ENCODE measurements at regions of chr17 and their contacts with region 1.

Region 1: DNA sequence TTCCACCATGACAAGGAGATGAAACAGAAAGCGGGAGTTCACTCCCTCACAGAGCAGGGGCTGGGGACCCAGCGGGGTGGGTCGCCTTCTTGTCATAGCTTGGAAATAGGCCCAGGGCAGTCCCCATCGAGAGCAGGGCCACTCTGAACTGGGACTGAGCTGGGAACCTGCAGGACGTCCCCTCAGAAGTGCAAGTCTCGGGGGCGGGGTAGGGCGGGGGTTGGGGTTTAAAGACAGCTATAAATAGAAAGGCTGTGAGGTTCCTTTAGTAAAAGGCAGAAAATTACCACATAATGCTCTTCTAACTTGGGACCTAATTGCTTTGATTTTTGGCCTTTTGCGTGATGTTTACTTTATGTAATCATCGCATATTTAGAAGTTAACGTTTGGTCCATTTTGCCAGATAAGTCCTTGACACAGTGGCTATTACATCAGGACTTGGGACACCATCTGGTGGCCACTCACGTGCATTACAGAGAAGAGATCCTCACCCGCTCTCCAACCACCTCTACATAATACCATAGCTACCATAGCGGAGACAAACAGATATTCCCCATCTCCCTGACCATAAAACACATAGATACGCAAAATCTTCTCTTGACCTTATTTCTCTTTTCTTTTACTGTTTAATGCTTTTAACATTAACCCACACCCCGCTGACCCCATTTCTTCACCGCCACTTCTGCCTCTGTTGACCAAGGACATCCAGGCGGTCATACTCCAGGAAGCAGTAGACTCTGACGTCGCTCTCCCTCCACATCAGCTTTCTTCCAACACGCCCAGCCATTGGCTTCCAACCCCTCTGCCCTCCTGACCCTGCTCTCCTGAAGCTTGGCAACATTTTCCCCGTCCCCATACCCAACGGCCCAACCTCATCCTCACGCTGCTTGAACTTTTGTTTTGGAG is 27.5 kb upstream of the PIK3R6 start:
- DNase-seq: no peak
- ATAC-seq: peak; percentile 90

Region 2: DNA sequence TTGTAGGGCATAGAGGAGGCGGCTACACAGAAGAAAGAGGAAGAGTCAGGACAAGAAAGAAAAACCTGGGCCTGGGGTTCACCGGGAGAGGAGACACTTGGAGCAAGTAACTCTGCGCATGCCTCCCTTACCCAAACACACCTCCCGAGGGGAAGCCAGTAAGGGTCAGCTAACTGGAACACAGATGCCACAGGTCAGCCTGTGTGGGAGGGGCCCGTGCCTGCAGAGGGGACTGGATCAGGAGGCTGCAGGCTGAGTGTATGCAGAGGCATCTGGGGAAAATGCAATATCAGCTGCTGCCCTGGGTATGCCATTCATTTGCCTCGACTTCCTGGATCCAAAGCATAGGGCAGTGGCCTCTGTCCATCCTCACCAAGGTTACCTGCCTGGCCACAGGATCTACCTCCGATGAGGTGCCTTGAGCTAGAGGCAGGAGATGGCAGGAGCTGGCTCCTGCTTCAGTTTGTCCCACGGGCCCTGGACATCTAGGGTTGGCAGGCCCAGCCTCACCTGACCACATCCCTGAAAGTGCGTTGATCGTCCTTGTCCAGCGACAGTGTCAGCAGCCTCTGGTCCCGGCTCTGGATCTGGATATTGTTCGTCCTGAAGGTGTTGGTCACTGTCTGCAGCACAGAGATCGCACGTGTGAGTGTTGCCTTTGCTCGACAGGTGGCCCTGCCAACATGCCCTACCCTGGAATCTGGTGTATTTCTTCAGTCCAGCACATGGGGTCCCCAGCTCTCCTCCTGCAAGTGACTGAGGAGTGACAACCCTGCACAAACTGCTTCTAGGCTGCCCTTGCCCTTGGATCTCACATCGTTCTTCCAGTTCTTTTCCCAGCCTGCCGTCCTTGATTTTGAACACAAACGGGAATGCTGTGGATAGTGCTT is 91.2 kb before region 1 on chr17:
- intact Hi-C with region 1: loop called (anchors 5 kb)
- DNase-seq: no peak
- ATAC-seq: peak; percentile 73

Measured in Right ventricle myocardium superior (tissue), 1 donor.